ENCODE measurements at regions of chr7 and their contacts with region 1.

Region 1: DNA sequence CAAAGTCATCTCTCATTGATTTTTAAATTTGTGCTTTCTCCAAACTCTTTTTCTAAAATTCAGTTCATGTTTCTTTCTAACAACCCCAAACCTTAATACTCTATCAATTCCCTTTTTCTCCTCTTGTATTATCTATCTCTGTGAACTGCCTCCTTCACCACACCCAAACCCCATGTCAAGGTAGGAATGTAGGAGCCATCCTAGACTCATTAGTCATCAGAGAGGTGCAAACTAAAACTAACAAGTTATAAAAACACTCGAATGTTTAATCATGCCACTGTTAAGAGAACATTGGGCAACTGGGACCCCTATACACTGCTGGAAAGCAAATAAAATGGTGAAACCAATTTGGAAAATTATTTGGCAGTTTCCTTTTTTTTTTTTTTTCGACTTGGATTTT is 533.8 kb upstream of the LRRN3 start:
- DNase-seq: no peak
- ATAC-seq: no peak
- H3K4me3 ChIP-seq: no peak overlapping the region
- H3K27ac ChIP-seq: no peak overlapping the region
- H3K4me1 ChIP-seq: no peaks in the 10 kb centered on the region
- H3K27me3 ChIP-seq: no peaks in the 10 kb centered on the region

Region 2: GRCh38 chr7:110502888-110503465 is 54.2 kb before region 1 on chr7:
- intact Hi-C with region 1: loop called in 1 of 4 experiments (anchors 10 kb)
- DNase-seq: no peak
- ATAC-seq: no peak
- H3K4me3 ChIP-seq: no peak overlapping the region
- H3K27ac ChIP-seq: no peak overlapping the region
- H3K4me1 ChIP-seq: no peaks in the 10 kb centered on the region
- H3K27me3 ChIP-seq: no peaks in the 10 kb centered on the region

Measured in right cardiac atrium (tissue), 5 donors.